Heart left ventricle (tissue), 16 donors: ENCODE measurements at regions of chr3 and their contacts with region 1.

Region 1: DNA sequence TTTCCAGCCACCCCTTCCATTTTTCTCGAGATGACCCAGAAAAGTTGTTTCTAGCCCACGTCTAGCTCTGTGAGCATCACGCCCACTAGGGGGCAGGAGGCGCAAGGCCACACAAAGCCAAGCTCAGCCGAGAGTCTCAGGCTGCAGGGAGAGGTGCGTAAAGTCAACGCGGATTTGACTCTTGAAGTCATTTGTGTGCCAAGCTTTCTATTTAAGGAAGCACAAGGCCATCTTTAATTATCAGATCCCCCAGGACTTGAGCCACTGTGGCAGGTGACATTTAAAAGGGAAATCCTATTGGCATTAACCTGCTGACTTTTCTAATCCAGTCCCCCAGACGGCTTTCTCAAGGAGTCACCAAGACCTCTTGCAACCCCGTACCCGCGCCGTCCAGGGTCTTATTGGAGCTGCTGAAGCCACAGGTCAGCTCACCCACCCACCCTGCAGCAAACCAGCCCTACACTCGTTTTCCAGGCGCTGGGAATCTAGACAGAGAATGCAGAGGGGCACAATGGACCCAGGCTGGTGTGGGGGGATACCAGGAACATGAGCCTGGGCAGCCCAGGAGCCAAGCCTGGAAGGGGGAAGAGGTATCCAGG is 62.1 kb downstream of the CAPN7 start:
- DNase-seq: peak; percentile 85 to 91 (median 86)
- ATAC-seq: peak; percentile 68 to 76 (median 73)
- H3K4me3 ChIP-seq: no peak overlapping the region
- H3K27ac ChIP-seq: peak overlapping the region in 4 of 12 donors; percentile 17 to 79 (median 54)
- H3K4me1 ChIP-seq: peaks cover 0 to 56% (median 19%) of the 10 kb centered on the region in 12 donors
- H3K27me3 ChIP-seq: no peaks in the 10 kb centered on the region
- CTCF ChIP-seq: peak; percentile 88 to 98 (median 95)
- POLR2A ChIP-seq: no peak

Region 2: GRCh38 chr3:15332405-15333098 is 64.4 kb after region 1 on chr3 and contains the start of gene SH3BP5:
- intact Hi-C with region 1: loop called (anchors 1 to 5 kb)
- DNase-seq: peak; percentile 79 to 87 (median 83)
- ATAC-seq: peak; percentile 57 to 94 (median 89)
- H3K4me3 ChIP-seq: peak within 1 kb of the TSS; percentile 64 to 96 (median 88)
- H3K27ac ChIP-seq: peak within 1 kb of the TSS; percentile 71 to 91 (median 82)
- H3K4me1 ChIP-seq: peaks cover 0 to 50% (median 30%) of the 10 kb centered on the region in 12 donors
- H3K27me3 ChIP-seq: no peaks in the 10 kb centered on the region
- CTCF ChIP-seq: peak; percentile 56 to 90 (median 82)
- POLR2A ChIP-seq: peak in 1 of 2 donors; percentile 69
- total RNA-seq, gene SH3BP5: 4.9 to 28.6 (median 11.7) TPM

Region 3: DNA sequence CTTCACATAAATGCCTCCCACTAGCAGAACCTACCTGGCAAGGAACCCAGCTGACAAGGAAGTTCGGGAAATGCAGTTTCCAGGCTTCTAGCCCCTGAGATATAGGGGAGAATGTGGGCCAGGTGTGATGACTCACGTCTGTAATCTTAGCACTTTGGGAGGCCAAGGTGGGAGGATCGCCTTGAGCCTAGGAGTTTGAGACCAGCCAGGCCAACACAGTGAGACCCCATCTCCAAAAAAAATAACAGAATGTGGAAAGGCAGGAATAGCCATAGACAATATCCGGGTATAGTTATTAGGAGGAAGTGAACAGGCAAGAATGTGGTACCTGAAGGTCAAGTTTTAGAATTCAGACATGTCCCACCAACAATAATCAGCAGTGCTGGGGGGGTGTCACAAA is 104.8 kb after region 1 on chr3:
- intact Hi-C with region 1: loop called in 8 of 10 experiments (anchors 1 to 2 kb)
- DNase-seq: no peak
- ATAC-seq: no peak
- H3K4me3 ChIP-seq: no peak overlapping the region
- H3K27ac ChIP-seq: no peak overlapping the region
- H3K4me1 ChIP-seq: peaks cover 0 to 4% (median 0%) of the 10 kb centered on the region in 12 donors
- H3K27me3 ChIP-seq: no peaks in the 10 kb centered on the region
- CTCF ChIP-seq: no peak
- POLR2A ChIP-seq: no peak

Region 4: GRCh38 chr3:15377961-15378791 is 110.0 kb after region 1 on chr3:
- intact Hi-C with region 1: loop called (anchors 1 to 2 kb)
- DNase-seq: peak; percentile 92 to 97 (median 94)
- ATAC-seq: peak; percentile 97 to 98 (median 98)
- H3K4me3 ChIP-seq: peak overlapping the region in 3 of 12 donors; percentile 0 to 25 (median 20)
- H3K27ac ChIP-seq: peak overlapping the region in 8 of 12 donors; percentile 8 to 73 (median 56)
- H3K4me1 ChIP-seq: peaks cover 0 to 6% (median 0%) of the 10 kb centered on the region in 12 donors
- H3K27me3 ChIP-seq: no peaks in the 10 kb centered on the region
- CTCF ChIP-seq: peak; percentile 68 to 91 (median 82)
- POLR2A ChIP-seq: peak in 1 of 2 donors; percentile 33

Region 5: GRCh38 chr3:15405448-15406050 is 137.4 kb after region 1 on chr3:
- intact Hi-C with region 1: loop called in 4 of 10 experiments (anchors 1 to 5 kb)
- DNase-seq: no peak
- ATAC-seq: peak in 3 of 4 donors; percentile 49 to 77 (median 68)
- H3K4me3 ChIP-seq: no peak overlapping the region
- H3K27ac ChIP-seq: no peak overlapping the region
- H3K4me1 ChIP-seq: peaks cover 0 to 18% (median 0%) of the 10 kb centered on the region in 12 donors
- H3K27me3 ChIP-seq: no peaks in the 10 kb centered on the region
- CTCF ChIP-seq: peak; percentile 49 to 74 (median 64)
- POLR2A ChIP-seq: no peak

Region 6: DNA sequence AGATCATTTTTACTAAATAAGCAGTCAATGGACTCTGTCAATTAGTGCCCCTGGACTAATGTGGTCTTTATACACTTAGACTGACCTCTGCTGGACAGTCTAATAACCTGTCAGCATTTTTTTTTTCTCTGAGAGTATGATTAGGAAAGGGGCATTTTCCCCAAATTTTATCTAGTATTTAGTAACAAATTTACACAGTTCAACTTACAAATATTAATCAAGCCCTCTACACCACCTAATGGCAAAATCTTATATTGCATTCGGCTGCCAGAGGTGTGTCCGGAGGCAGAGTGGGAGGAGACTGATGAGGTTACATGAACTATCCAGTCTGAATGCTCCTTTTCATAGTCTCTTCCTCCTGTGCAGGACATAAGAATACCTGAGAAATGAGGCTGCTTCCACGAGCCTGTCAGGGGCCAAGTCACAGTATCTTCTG is 289.4 kb after region 1 on chr3:
- intact Hi-C with region 1: loop called in 5 of 10 experiments (anchors 1 to 10 kb)
- DNase-seq: peak in 2 of 5 donors; percentile 35 to 39
- ATAC-seq: peak; percentile 33 to 79 (median 71)
- H3K4me3 ChIP-seq: no peak overlapping the region
- H3K27ac ChIP-seq: peak overlapping the region in 1 of 12 donors; percentile 67
- H3K4me1 ChIP-seq: peaks cover 0 to 21% (median 0%) of the 10 kb centered on the region in 12 donors
- H3K27me3 ChIP-seq: no peaks in the 10 kb centered on the region
- CTCF ChIP-seq: peak; percentile 41 to 77 (median 60)
- POLR2A ChIP-seq: no peak